Naive thymus-derived CD4-positive, alpha-beta T cell (primary cell): ENCODE measurements at regions of chr15 and their contacts with region 1.

Region 1: DNA sequence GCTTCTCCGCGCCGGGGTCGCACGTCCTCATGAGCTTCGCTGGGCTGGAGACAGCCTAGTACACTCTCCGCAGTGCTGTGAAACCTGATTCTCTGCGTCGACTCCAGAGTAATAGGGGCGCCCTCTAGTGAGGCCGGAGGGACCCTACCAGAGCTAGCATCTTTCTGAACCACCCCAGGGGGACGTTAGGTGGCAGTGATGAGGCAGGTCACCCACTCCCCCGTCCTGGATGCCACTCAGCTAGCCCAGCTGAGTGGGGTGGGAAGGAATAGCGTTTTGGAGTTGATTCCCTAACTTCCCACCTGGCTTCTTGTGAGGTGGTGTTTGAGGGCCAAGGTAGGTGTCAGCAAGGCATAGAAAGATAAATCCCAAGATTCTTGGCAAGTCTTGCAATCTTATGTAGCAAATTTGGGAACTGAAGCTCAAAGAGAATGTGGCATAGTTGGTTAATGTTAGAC is 4.0 kb downstream of the DUOXA2 start:
- DNase-seq: peak; percentile 64 to 86 (median 81)
- ATAC-seq: peak; percentile 99
- H3K4me3 ChIP-seq: peak overlapping the region; percentile 34
- H3K4me3 Mint-ChIP-seq: peak overlapping the region; percentile 69 to 91 (median 82)
- H3K27ac ChIP-seq: no peak overlapping the region
- H3K27ac Mint-ChIP-seq: peak overlapping the region in 1 of 9 donors; percentile 47
- H3K4me1 ChIP-seq: peaks cover 0 to 35% of the 10 kb centered on the region in 2 donors
- H3K4me1 Mint-ChIP-seq: peaks cover 19 to 42% (median 33%) of the 10 kb centered on the region in 7 donors
- H3K27me3 ChIP-seq: peaks cover 4 to 27% of the 10 kb centered on the region in 2 donors
- H3K27me3 Mint-ChIP-seq: peaks cover 50 to 82% (median 65%) of the 10 kb centered on the region in 5 donors

Region 2: DNA sequence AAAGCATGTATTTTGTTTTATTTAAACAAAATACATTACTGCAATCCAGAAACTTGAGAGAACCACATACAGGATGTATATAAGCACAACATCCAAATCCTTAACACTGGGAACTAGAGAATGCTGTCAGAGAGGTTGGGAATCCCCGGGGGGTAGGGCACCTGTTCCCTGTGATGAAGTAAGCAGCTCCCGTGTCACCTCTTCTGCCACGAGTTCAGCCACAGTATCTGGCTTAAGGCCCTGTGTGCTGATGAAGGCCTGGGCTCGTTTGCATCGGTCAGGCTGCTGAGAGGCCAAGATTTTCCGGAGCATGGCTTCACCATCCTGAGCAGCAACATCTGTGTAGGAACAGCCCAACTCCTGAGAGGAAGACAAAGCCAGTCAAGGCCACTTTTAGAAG is 544.8 kb before region 1 on chr15:
- CTCF ChIA-PET with region 1: no interaction called
- POLR2A ChIA-PET with region 1: no interaction called
- intact Hi-C with region 1: loop called in 1 of 2 experiments (anchors 5 kb)
- DNase-seq: no peak
- ATAC-seq: no peak
- H3K4me3 ChIP-seq: no peak overlapping the region
- H3K4me3 Mint-ChIP-seq: no peak overlapping the region
- H3K27ac ChIP-seq: peak overlapping the region; percentile 29
- H3K27ac Mint-ChIP-seq: peak overlapping the region in 4 of 9 donors; percentile 14 to 62 (median 33)
- H3K4me1 ChIP-seq: peaks cover 0 to 2% of the 10 kb centered on the region in 2 donors
- H3K4me1 Mint-ChIP-seq: peaks cover 4 to 11% (median 9%) of the 10 kb centered on the region in 7 donors
- H3K27me3 ChIP-seq: no peaks in the 10 kb centered on the region
- H3K27me3 Mint-ChIP-seq: no peaks in the 10 kb centered on the region

Region 3: GRCh38 chr15:45022871-45023658 is 95.1 kb before region 1 on chr15 and contains the start of gene SORD:
- CTCF ChIA-PET with region 1: interaction called, 3 read pairs
- POLR2A ChIA-PET with region 1: no interaction called
- intact Hi-C with region 1: loop called in 1 of 2 experiments (anchors 5 kb)
- DNase-seq: peak; percentile 77 to 96 (median 83)
- ATAC-seq: peak; percentile 99
- H3K4me3 ChIP-seq: peak within 1 kb of the TSS; percentile 83
- H3K4me3 Mint-ChIP-seq: peak within 1 kb of the TSS; percentile 80 to 93 (median 88)
- H3K27ac ChIP-seq: peak within 1 kb of the TSS; percentile 42
- H3K27ac Mint-ChIP-seq: peak within 1 kb of the TSS; percentile 14 to 86 (median 60)
- H3K4me1 ChIP-seq: peaks cover 8 to 10% of the 10 kb centered on the region in 2 donors
- H3K4me1 Mint-ChIP-seq: peaks cover 12 to 32% (median 17%) of the 10 kb centered on the region in 7 donors
- H3K27me3 ChIP-seq: no peaks in the 10 kb centered on the region
- H3K27me3 Mint-ChIP-seq: peaks cover 12 to 28% (median 21%) of the 10 kb centered on the region in 5 donors
- total RNA-seq, gene SORD: 2.7 to 7.8 (median 6.4) TPM

Region 4: GRCh38 chr15:45187894-45188830 is 70.0 kb after region 1 on chr15 and contains the start of gene SHF:
- CTCF ChIA-PET with region 1: no interaction called
- POLR2A ChIA-PET with region 1: no interaction called
- intact Hi-C with region 1: loop called in 1 of 2 experiments (anchors 1 kb)
- DNase-seq: peak; percentile 38 to 83 (median 57)
- ATAC-seq: peak; percentile 81
- H3K4me3 ChIP-seq: peak within 1 kb of the TSS; percentile 76
- H3K4me3 Mint-ChIP-seq: peak within 1 kb of the TSS; percentile 84 to 97 (median 92)
- H3K27ac ChIP-seq: peak within 1 kb of the TSS; percentile 92
- H3K27ac Mint-ChIP-seq: peak within 1 kb of the TSS; percentile 77 to 95 (median 89)
- H3K4me1 ChIP-seq: peaks cover 3 to 5% of the 10 kb centered on the region in 2 donors
- H3K4me1 Mint-ChIP-seq: peaks cover 11 to 27% (median 20%) of the 10 kb centered on the region in 7 donors
- H3K27me3 ChIP-seq: no peaks in the 10 kb centered on the region
- H3K27me3 Mint-ChIP-seq: peaks cover 0 to 25% (median 2%) of the 10 kb centered on the region in 5 donors
- total RNA-seq, gene SHF: 3.5 to 8.7 (median 6.2) TPM

Region 5: DNA sequence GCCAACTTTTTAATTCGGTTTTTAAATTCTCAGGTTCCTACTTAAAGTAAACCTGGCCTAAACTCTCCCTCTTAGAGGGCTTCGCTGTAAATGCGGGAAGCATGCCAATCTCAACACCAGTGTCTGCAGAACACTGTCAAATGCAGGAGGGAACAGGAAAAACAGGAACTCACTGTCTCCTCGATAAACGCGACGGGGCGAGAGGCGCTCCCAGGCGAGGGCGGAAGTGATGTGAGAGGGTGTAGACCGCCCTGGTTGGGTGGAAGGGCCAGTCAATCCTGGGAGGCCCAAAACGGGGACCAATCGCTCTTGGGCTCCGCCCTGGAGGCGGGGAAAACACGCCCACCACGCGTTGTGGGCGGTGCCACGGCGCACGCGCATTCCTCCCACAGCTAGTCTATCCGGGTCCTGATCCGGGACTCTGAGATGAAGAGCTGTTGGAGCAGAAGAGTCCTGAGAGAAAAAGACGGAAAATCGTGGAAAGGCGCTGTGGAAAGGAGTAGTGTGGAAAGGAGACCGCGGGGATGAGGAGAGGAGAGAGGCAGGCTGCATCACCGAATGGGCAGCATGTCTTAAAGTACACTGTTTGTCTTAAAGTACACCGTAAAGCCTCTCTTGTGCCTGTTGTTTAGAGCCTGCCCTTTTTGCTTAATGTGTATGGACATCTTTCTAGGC is 161.0 kb after region 1 on chr15:
- CTCF ChIA-PET with region 1: no interaction called
- POLR2A ChIA-PET with region 1: interaction called, 4 read pairs
- intact Hi-C with region 1: loop called in 1 of 2 experiments (anchors 2 kb)
- DNase-seq: peak; percentile 93 to 99 (median 98)
- ATAC-seq: peak; percentile 100
- H3K4me3 ChIP-seq: peak overlapping the region; percentile 90
- H3K4me3 Mint-ChIP-seq: peak overlapping the region; percentile 90 to 99 (median 95)
- H3K27ac ChIP-seq: peak overlapping the region; percentile 84
- H3K27ac Mint-ChIP-seq: peak overlapping the region; percentile 84 to 99 (median 93)
- H3K4me1 ChIP-seq: peaks cover 9 to 12% of the 10 kb centered on the region in 2 donors
- H3K4me1 Mint-ChIP-seq: peaks cover 10 to 34% (median 23%) of the 10 kb centered on the region in 7 donors
- H3K27me3 ChIP-seq: no peaks in the 10 kb centered on the region
- H3K27me3 Mint-ChIP-seq: peaks cover 0 to 1% (median 0%) of the 10 kb centered on the region in 5 donors

Region 6: GRCh38 chr15:46034755-46035154 is 916.6 kb after region 1 on chr15:
- CTCF ChIA-PET with region 1: no interaction called
- POLR2A ChIA-PET with region 1: no interaction called
- intact Hi-C with region 1: no loop called
- DNase-seq: no peak
- ATAC-seq: no peak
- H3K4me3 ChIP-seq: no peak overlapping the region
- H3K4me3 Mint-ChIP-seq: no peak overlapping the region
- H3K27ac ChIP-seq: no peak overlapping the region
- H3K27ac Mint-ChIP-seq: no peak overlapping the region
- H3K4me1 ChIP-seq: no peaks in the 10 kb centered on the region
- H3K4me1 Mint-ChIP-seq: no peaks in the 10 kb centered on the region
- H3K27me3 ChIP-seq: no peaks in the 10 kb centered on the region
- H3K27me3 Mint-ChIP-seq: peaks cover 0 to 4% (median 0%) of the 10 kb centered on the region in 5 donors